Activated CD4-positive, alpha-beta memory T cell treated with anti-CD3 and anti-CD28 coated beads for 36 hours (primary cell): ENCODE measurements at regions of chr1 and their contacts with region 1.

Region 1: DNA sequence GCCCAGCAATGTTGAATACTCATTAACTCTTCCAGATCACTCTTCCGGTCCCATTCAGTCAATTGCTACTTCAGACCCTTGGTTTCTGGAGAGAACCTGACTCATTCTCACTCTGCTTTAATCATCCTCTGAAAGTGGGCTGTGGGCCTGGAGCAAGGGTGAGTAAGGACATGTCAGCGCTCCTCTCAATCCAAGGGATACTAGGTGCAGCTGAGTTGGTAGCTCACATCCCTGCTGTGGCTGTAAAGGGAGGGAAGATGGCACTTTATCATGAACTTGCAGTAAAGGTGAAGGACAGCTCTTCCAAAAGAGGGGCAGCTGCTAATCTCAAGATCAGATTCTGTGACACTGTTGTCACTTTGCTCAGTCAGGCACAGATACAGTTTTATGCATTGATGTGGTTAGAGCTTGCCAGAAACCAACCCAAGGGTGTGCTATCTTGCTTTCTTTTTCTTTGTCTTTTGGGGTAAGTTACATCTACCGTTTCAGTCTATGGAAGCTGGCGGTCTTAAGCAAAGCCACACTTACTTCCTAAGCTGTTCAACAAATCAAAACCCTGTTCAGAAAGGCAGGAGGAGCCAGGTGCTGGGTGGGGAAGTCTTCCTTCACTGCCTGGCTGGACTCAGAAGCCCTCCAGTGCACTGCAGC is 26.5 kb upstream of the NTPCR start:
- DNase-seq: peak; percentile 73
- H3K4me3 Mint-ChIP-seq: peak overlapping the region; percentile 18
- H3K27ac Mint-ChIP-seq: peak overlapping the region; percentile 91
- H3K4me1 Mint-ChIP-seq: peaks cover 40% of the 10 kb centered on the region
- H3K27me3 Mint-ChIP-seq: no peaks in the 10 kb centered on the region

Region 2: DNA sequence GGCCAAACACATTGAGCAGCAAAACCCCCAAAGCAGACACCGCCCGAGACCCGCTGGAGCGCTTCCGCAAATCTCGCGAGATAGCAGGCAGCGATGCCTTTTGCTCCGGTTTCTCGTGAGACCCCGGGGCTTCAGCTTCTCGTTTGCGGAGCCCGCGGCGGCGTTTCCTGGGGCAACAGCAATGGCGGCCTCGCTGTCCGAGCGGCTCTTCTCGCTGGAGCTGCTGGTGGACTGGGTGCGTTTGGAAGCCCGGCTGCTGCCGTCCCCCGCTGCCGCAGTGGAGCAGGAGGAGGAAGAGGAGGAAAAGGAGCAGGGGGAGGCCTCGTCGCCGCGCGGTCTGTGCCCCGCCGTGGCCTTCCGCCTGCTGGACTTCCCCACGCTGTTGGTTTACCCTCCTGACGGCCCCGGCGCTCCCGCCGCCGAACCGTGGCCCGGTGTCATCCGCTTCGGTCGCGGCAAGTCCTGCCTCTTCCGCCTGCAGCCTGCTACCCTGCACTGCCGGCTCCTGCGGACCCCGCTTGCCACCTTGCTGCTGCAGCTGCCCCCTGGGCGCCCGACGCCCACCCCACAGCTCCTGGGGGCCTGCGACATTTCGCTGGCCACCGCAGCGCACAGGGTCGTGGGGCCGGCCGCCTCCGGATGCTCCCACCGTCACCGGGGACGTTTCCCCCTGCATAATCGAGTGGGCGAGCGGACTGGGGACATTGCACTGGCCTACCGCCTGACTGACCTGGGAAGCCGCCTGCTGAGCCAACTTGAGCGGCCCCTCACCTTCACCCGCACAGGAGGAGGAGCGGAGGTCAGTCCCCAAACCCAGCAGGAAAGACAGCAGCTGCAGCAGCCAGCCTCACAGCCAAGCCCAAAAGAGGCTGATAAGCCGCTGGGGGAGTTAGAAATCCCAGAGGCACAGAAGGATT is 118.3 kb before region 1 on chr1 and contains the start of gene MAP10:
- CTCF ChIA-PET with region 1: no interaction called
- POLR2A ChIA-PET with region 1: interaction called, 3 read pairs
- intact Hi-C with region 1: loop called (anchors 1 kb)
- DNase-seq: peak; percentile 84
- H3K4me3 Mint-ChIP-seq: peak within 1 kb of the TSS; percentile 84
- H3K27ac Mint-ChIP-seq: peak within 1 kb of the TSS; percentile 38
- H3K4me1 Mint-ChIP-seq: peaks cover 21% of the 10 kb centered on the region
- H3K27me3 Mint-ChIP-seq: no peaks in the 10 kb centered on the region
- total RNA-seq, gene MAP10: 0.86 to 1.1 TPM

Region 3: DNA sequence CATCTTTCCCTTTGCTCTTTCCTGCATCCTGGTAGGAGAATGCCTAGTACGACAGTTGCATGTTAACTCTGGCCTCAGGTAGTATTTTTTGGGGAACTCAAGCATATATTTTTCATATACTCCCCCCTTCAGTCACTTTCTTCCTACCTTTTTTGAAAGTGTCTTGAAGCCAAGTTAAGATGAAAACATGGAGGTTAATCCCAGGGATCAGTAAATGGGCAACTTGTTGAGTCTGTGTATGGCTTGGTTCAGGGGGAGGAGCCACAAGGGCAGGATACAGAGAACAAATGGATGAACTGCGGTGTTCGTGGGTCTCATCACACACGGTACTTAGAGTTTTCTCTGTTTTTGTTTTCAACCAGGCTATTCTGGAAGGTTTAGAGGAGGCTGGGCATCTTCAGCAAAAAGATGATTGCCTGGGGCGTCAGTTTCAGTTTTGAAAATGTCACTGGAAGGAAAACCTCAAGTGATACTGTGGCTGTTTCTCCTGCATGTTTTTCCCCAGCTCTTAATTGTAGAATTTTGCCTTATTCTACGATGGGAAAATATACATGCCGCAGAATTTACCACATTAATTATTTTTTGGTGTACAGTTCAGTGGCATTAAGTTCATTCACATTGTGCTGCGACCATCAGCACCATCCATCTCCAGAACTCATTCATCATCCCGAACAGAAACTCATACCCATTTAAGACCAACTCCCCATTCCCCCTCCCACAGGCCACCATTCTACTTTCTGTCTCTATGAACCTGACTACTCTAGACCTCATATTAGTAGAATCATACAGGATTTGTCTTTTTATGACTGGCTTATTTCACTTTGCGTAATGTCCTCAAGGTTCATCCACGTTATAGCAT is 47.1 kb before region 1 on chr1:
- CTCF ChIA-PET with region 1: interaction called, 5 read pairs
- POLR2A ChIA-PET with region 1: interaction called, 7 read pairs
- intact Hi-C with region 1: loop called (anchors 2 kb)
- DNase-seq: peak; percentile 53
- H3K4me3 Mint-ChIP-seq: no peak overlapping the region
- H3K27ac Mint-ChIP-seq: peak overlapping the region; percentile 6
- H3K4me1 Mint-ChIP-seq: peaks cover 14% of the 10 kb centered on the region
- H3K27me3 Mint-ChIP-seq: peaks cover 6% of the 10 kb centered on the region